CD8-positive, alpha-beta T cell (primary cell): ENCODE measurements at regions of chr4 and their contacts with region 1.

Region 1: GRCh38 chr4:185597532-185598188 is 62.4 kb upstream of the PDLIM3 start:
- DNase-seq: peak; percentile 22 to 77 (median 71)
- ATAC-seq: peak; percentile 71
- H3K4me3 ChIP-seq: no peak overlapping the region
- H3K4me3 Mint-ChIP-seq: no peak overlapping the region
- H3K27ac ChIP-seq: no peak overlapping the region
- H3K27ac Mint-ChIP-seq: no peak overlapping the region
- H3K4me1 ChIP-seq: no peaks in the 10 kb centered on the region
- H3K4me1 Mint-ChIP-seq: peaks cover 3% of the 10 kb centered on the region
- H3K27me3 ChIP-seq: no peaks in the 10 kb centered on the region
- H3K27me3 Mint-ChIP-seq: peaks cover 24% of the 10 kb centered on the region
- CTCF ChIP-seq: peak; percentile 99

Region 2: GRCh38 chr4:184745831-184746795 is 851.5 kb before region 1 on chr4:
- CTCF ChIA-PET with region 1: no interaction called
- POLR2A ChIA-PET with region 1: no interaction called
- intact Hi-C with region 1: no loop called
- DNase-seq: peak; percentile 31 to 81 (median 74)
- ATAC-seq: peak; percentile 97
- H3K4me3 ChIP-seq: no peak overlapping the region
- H3K4me3 Mint-ChIP-seq: peak overlapping the region; percentile 53
- H3K27ac ChIP-seq: no peak overlapping the region
- H3K27ac Mint-ChIP-seq: peak overlapping the region; percentile 78
- H3K4me1 ChIP-seq: peaks cover 8% of the 10 kb centered on the region
- H3K4me1 Mint-ChIP-seq: peaks cover 16% of the 10 kb centered on the region
- H3K27me3 ChIP-seq: no peaks in the 10 kb centered on the region
- H3K27me3 Mint-ChIP-seq: peaks cover 3% of the 10 kb centered on the region
- CTCF ChIP-seq: peak; percentile 68

Region 3: DNA sequence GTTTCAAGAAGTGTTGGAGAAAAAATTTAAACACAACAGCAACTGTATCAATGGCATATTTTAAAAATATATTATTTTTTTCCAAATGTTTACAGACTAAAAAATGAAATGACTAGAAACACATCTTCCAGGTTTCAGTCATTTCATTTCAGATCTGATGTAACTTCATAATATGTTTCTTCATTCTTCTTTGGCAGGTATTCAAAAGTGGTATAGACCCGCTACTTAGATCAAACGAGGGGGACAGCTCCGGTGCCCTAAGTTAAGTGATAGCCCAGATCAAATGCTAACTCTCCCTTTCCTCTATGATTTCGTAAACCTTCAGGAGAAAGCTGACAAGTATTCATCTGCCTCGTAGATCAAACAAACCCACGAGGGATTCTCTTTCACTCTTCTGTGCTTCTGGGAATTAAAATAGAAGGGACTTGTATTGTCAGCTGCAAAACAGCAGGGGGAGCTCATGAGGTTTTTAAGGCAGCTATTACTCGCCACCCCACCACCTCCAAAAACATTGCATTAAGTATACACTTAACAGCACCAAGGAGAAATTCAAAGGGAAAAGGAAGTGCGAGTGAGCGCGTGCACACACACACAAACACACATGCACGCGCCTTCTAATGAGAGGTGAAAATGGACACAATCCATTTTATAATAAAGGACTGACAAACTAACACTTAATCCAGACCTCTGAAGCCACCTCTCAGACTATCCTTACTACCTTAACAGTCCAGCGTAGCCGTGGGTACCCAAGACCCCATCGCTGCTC is 558.0 kb before region 1 on chr4:
- CTCF ChIA-PET with region 1: interaction called, 9 read pairs
- POLR2A ChIA-PET with region 1: no interaction called
- intact Hi-C with region 1: loop called (anchors 2 kb)
- DNase-seq: peak; percentile 9 to 72 (median 47)
- ATAC-seq: peak; percentile 77
- H3K4me3 ChIP-seq: no peak overlapping the region
- H3K4me3 Mint-ChIP-seq: peak overlapping the region; percentile 44
- H3K27ac ChIP-seq: no peak overlapping the region
- H3K27ac Mint-ChIP-seq: no peak overlapping the region
- H3K4me1 ChIP-seq: peaks cover 6% of the 10 kb centered on the region
- H3K4me1 Mint-ChIP-seq: peaks cover 4% of the 10 kb centered on the region
- H3K27me3 ChIP-seq: no peaks in the 10 kb centered on the region
- H3K27me3 Mint-ChIP-seq: peaks cover 16% of the 10 kb centered on the region
- CTCF ChIP-seq: peak; percentile 86

Region 4: DNA sequence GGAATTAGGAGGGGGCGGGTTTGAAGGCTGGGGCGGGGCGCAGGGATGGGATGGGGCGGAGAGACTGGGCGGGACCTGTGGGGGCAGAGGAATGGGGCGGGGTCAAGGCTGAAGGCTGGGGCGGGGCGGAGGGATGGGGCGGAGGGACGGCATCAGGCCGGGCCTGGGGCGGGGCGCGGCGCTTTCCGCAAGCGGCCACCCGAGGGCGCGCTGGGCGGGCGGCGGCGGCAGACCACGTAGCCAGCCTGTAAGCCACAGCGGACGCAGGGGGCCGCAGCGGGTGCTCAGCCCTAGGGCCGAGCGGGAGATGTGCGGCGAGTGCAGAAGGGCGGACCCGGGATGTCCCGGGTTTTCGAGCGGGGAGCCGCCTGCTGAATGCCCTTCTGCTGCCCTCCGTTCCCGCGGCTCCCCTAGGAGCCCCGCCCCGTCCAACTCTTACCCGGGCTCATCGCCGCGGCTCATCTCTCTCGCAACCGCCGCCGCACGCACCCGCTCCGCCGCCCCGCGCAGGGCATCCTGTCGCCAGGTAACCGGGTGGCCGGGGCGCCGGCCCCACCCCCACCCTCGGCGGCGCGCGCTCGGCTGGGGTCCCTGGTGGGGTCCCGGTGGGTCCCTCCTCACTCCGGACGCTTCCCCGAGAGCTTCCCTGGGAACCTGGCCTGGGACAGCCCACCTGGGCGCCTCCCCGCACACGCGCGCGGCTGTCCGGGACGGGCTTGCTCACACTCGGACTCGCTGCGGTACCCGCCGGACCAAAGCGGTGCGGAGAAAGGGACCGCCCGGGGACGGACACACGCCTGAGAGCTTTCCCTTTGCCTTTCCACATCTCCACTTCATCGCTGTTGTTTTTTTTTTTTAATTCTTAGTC is 126.2 kb before region 1 on chr4 and contains the start of gene CCDC110:
- CTCF ChIA-PET with region 1: interaction called, 3 read pairs
- POLR2A ChIA-PET with region 1: no interaction called
- intact Hi-C with region 1: loop called (anchors 1 kb)
- DNase-seq: peak; percentile 79 to 96 (median 88)
- ATAC-seq: peak; percentile 95
- H3K4me3 ChIP-seq: peak within 1 kb of the TSS; percentile 60 to 85
- H3K4me3 Mint-ChIP-seq: peak within 1 kb of the TSS; percentile 93
- H3K27ac ChIP-seq: peak within 1 kb of the TSS; percentile 27 to 34
- H3K27ac Mint-ChIP-seq: peak within 1 kb of the TSS; percentile 67
- H3K4me1 ChIP-seq: peaks cover 13% of the 10 kb centered on the region
- H3K4me1 Mint-ChIP-seq: peaks cover 16% of the 10 kb centered on the region
- H3K27me3 ChIP-seq: no peaks in the 10 kb centered on the region
- H3K27me3 Mint-ChIP-seq: peaks cover 2% of the 10 kb centered on the region
- CTCF ChIP-seq: peak; percentile 64
- total RNA-seq, gene CCDC110: 0.57 TPM in 1 of 2 experiments, not detected in the other

Region 5: DNA sequence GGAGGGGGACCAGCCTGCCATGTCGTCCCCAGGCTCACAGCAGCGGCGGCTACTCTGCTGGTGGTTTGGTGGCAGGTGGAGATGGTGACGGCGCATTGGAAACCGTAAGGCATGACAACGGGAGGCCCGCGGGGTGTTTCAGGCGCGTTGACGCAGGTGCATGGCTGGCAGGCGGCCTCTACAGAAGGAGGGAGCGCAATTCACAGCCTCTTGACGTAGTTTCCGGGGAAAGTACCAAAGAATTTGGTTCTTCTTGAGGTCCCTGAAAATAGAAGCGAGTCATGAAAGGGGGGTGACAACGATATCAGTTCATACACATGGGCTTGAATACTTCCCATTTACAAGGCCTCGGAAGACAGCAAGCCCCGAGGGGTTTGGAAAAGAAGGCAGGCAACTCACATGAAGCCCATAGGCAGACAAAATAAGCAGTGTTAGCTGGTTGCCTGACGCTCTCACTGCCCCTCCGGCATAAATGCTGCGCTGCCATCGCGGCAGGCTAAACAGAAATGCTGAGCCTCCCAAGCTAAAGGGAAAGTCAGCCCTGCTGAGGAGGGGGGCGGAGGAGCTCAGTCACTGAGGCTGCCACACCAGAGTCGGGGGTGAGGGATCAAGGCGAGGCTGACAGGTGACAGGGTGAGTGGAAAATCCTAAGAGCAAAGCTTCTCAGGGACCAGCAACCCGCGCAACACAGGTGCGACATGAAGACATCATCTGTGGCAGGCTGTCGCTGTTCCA is 10.1 kb before region 1 on chr4:
- CTCF ChIA-PET with region 1: interaction called, 20 read pairs
- POLR2A ChIA-PET with region 1: no interaction called
- intact Hi-C with region 1: no loop called
- DNase-seq: peak in 8 of 9 experiments; percentile 24 to 85 (median 57)
- ATAC-seq: peak; percentile 89
- H3K4me3 ChIP-seq: peak overlapping the region; percentile 8 to 12
- H3K4me3 Mint-ChIP-seq: peak overlapping the region; percentile 66
- H3K27ac ChIP-seq: no peak overlapping the region
- H3K27ac Mint-ChIP-seq: peak overlapping the region; percentile 61
- H3K4me1 ChIP-seq: peaks cover 6% of the 10 kb centered on the region
- H3K4me1 Mint-ChIP-seq: peaks cover 14% of the 10 kb centered on the region
- H3K27me3 ChIP-seq: peaks cover 0 to 3% of the 10 kb centered on the region in 2 experiments
- H3K27me3 Mint-ChIP-seq: peaks cover 58% of the 10 kb centered on the region
- CTCF ChIP-seq: no peak